ENCODE measurements at regions of chr1 and their contacts with region 1.

Region 1: GRCh38 chr1:24964811-24965570 is 34.9 kb upstream of the RUNX3 start:
- DNase-seq: peak; percentile 93
- CTCF ChIP-seq: no peak

Region 2: DNA sequence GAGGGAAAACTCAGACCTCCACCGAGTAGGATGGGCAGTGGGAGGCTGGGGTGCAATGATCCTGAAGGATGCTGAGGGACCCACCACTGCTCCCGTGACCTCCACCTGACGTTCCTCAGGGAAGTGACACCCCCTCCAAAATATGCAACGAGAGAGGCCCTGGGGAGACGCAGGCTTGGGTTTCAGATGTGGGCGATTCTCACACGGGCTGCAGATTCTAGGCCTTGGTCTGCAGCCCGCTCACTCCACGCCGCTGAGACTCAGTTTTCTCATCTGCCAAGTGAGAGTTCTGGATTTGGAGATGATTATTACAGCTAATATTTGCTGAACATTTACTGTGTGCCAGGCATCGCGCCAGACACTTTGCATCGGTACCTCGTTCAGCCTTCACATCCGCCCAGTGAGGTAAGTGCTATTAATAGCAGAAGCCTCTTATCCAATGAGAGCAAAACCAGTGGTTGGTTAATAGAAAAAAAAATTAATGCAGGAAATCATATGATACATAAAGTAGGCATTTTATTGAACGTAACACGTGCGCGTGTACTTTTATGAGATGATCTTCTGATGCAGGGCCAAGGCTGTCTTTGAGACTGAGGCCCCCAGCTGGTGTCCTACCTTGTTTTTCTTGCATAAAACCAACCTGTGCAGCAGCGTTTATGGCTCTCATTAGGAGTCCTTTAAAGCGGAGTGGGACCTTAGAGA is 67.1 kb after region 1 on chr1:
- in situ Hi-C with region 1: loop called (anchors 5 kb)
- DNase-seq: peak; percentile 73
- CTCF ChIP-seq: peak; percentile 12